Activated naive CD4-positive, alpha-beta T cell treated with anti-CD3 and anti-CD28 coated beads, Interleukin-2, amount 10 ng/mL, durations not matched to agents 7 days and 5 days (primary cell): ENCODE measurements at regions of chr1 and their contacts with region 1.

Region 1: GRCh38 chr1:35298464-35298863 is 30.0 kb downstream of the ZMYM4 start:
- DNase-seq: peak; percentile 49
- H3K4me3 Mint-ChIP-seq: no peak overlapping the region
- H3K27ac Mint-ChIP-seq: no peak overlapping the region
- H3K4me1 Mint-ChIP-seq: no peaks in the 10 kb centered on the region
- H3K27me3 Mint-ChIP-seq: no peaks in the 10 kb centered on the region

Region 2: GRCh38 chr1:35202048-35202719 is 96.3 kb before region 1 on chr1:
- CTCF ChIA-PET with region 1: interaction called, 17 read pairs
- DNase-seq: peak; percentile 81
- H3K4me3 Mint-ChIP-seq: no peak overlapping the region
- H3K27ac Mint-ChIP-seq: no peak overlapping the region
- H3K4me1 Mint-ChIP-seq: peaks cover 5% of the 10 kb centered on the region
- H3K27me3 Mint-ChIP-seq: peaks cover 30% of the 10 kb centered on the region

Region 3: GRCh38 chr1:35287807-35288640 is 10.4 kb before region 1 on chr1:
- CTCF ChIA-PET with region 1: no interaction called
- DNase-seq: no peak
- H3K4me3 Mint-ChIP-seq: no peak overlapping the region
- H3K27ac Mint-ChIP-seq: no peak overlapping the region
- H3K4me1 Mint-ChIP-seq: peaks cover 26% of the 10 kb centered on the region
- H3K27me3 Mint-ChIP-seq: no peaks in the 10 kb centered on the region

Region 4: DNA sequence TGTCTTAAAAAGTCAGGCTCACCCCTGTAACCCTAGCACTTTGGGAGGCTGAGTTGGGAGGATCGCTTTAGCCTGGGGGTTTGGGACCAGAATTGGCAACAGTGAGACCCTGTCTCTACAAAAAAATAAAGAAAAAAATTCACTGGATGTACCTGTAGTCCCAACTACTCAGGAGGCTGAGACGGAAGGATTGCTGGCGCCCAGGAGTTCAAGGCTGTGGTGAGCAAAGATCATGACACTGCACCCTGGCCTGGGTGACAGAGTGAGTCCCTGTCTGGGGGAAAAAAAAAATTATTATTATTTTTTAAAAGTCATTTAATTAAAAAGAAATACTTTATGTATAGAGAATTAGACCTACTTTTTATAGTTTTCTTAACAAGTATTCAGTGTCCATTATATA is 17.2 kb after region 1 on chr1:
- CTCF ChIA-PET with region 1: no interaction called
- DNase-seq: no peak
- H3K4me3 Mint-ChIP-seq: no peak overlapping the region
- H3K27ac Mint-ChIP-seq: no peak overlapping the region
- H3K4me1 Mint-ChIP-seq: no peaks in the 10 kb centered on the region
- H3K27me3 Mint-ChIP-seq: no peaks in the 10 kb centered on the region